ENCODE measurements at regions of chr10 and their contacts with region 1.

Region 1: GRCh38 chr10:14478604-14479003 is 147.9 kb upstream of the FRMD4A start:
- DNase-seq: peak in 1 of 2 experiments; percentile 63
- H3K4me3 ChIP-seq: no peak overlapping the region
- H3K4me3 Mint-ChIP-seq: no peak overlapping the region
- H3K27ac Mint-ChIP-seq: no peak overlapping the region
- H3K4me1 ChIP-seq: peaks cover 4% of the 10 kb centered on the region; the same call in 1 of the 2 replicates
- H3K4me1 Mint-ChIP-seq: no peaks in the 10 kb centered on the region
- H3K27me3 ChIP-seq: no peaks in the 10 kb centered on the region
- H3K27me3 Mint-ChIP-seq: no peaks in the 10 kb centered on the region
- CTCF ChIP-seq: peak; percentile 52 to 75

Region 2: GRCh38 chr10:14200698-14201544 is 277.7 kb before region 1 on chr10:
- CTCF ChIA-PET with region 1: interaction called, 4 read pairs
- POLR2A ChIA-PET with region 1: no interaction called
- intact Hi-C with region 1: loop called (anchors 1 kb)
- DNase-seq: peak in 1 of 2 experiments; percentile 49
- H3K4me3 ChIP-seq: no peak overlapping the region
- H3K4me3 Mint-ChIP-seq: no peak overlapping the region
- H3K27ac Mint-ChIP-seq: no peak overlapping the region
- H3K4me1 ChIP-seq: no peaks in the 10 kb centered on the region
- H3K4me1 Mint-ChIP-seq: peaks cover 4% of the 10 kb centered on the region
- H3K27me3 ChIP-seq: no peaks in the 10 kb centered on the region
- H3K27me3 Mint-ChIP-seq: peaks cover 3% of the 10 kb centered on the region
- CTCF ChIP-seq: peak; percentile 41 to 57

Region 3: GRCh38 chr10:14302035-14302434 is 176.6 kb before region 1 on chr10:
- CTCF ChIA-PET with region 1: no interaction called
- POLR2A ChIA-PET with region 1: no interaction called
- intact Hi-C with region 1: loop called (anchors 1 kb)
- DNase-seq: peak in 1 of 2 experiments; percentile 24
- H3K4me3 ChIP-seq: no peak overlapping the region
- H3K4me3 Mint-ChIP-seq: no peak overlapping the region
- H3K27ac Mint-ChIP-seq: no peak overlapping the region
- H3K4me1 ChIP-seq: peaks cover 8% of the 10 kb centered on the region
- H3K4me1 Mint-ChIP-seq: peaks cover 13% of the 10 kb centered on the region
- H3K27me3 ChIP-seq: no peaks in the 10 kb centered on the region
- H3K27me3 Mint-ChIP-seq: no peaks in the 10 kb centered on the region
- CTCF ChIP-seq: peak; percentile 61 to 68

Region 4: DNA sequence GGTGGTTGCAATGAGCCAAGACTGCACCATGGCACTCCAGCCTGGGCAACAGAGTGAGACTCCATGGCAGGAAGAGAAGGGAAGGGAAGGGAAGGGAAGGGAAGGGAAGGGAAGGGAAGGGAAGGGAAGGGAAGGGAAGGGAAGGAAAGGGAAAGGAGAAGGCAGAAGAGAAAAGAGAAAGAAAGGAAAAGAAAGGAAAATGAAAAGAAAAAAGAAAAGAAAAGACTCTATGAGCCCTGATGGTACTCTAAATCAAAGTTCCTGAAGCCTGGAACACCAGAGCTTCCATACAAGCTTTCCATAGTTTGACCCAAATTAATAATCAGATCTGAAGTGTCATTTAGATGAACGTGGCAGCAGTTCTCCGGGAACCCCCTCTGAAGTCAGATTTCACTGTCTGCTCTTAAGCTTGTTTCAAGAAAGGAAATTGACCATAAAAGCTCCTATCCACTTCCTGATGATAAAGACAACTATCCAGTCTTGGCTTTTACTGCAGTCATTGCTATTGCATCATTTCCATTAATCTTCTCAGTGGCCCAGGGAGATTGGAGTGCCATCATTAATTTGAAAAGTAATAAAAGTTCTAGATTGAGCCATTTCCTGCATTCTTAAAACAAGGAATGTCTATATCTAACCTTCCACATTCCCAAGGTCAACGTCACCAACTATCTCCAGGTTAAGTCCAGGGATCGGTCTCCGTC is 103.7 kb before region 1 on chr10:
- CTCF ChIA-PET with region 1: no interaction called
- POLR2A ChIA-PET with region 1: no interaction called
- intact Hi-C with region 1: loop called (anchors 5 kb)
- DNase-seq: no peak
- H3K4me3 ChIP-seq: no peak overlapping the region
- H3K4me3 Mint-ChIP-seq: no peak overlapping the region
- H3K27ac Mint-ChIP-seq: no peak overlapping the region
- H3K4me1 ChIP-seq: peaks cover 27% of the 10 kb centered on the region
- H3K4me1 Mint-ChIP-seq: peaks cover 23% of the 10 kb centered on the region
- H3K27me3 ChIP-seq: no peaks in the 10 kb centered on the region
- H3K27me3 Mint-ChIP-seq: no peaks in the 10 kb centered on the region
- CTCF ChIP-seq: no peak

Region 5: GRCh38 chr10:14459665-14460064 is 18.9 kb before region 1 on chr10:
- CTCF ChIA-PET with region 1: no interaction called
- POLR2A ChIA-PET with region 1: no interaction called
- intact Hi-C with region 1: loop called (anchors 2 kb)
- DNase-seq: no peak
- H3K4me3 ChIP-seq: no peak overlapping the region
- H3K4me3 Mint-ChIP-seq: no peak overlapping the region
- H3K27ac Mint-ChIP-seq: no peak overlapping the region
- H3K4me1 ChIP-seq: no peaks in the 10 kb centered on the region
- H3K4me1 Mint-ChIP-seq: no peaks in the 10 kb centered on the region
- H3K27me3 ChIP-seq: no peaks in the 10 kb centered on the region
- H3K27me3 Mint-ChIP-seq: peaks cover 4% of the 10 kb centered on the region
- CTCF ChIP-seq: no peak

Region 6: GRCh38 chr10:14507176-14507575 is 28.6 kb after region 1 on chr10:
- CTCF ChIA-PET with region 1: no interaction called
- POLR2A ChIA-PET with region 1: no interaction called
- intact Hi-C with region 1: no loop called
- DNase-seq: no peak
- H3K4me3 ChIP-seq: no peak overlapping the region
- H3K4me3 Mint-ChIP-seq: no peak overlapping the region
- H3K27ac Mint-ChIP-seq: peak overlapping the region; percentile 19
- H3K4me1 ChIP-seq: 0 out of 2 replicates have a peak, but pooled peaks cover 4% of the 10 kb centered on the region
- H3K4me1 Mint-ChIP-seq: no peaks in the 10 kb centered on the region
- H3K27me3 ChIP-seq: no peaks in the 10 kb centered on the region
- H3K27me3 Mint-ChIP-seq: no peaks in the 10 kb centered on the region
- CTCF ChIP-seq: no peak